CD4-positive, alpha-beta memory T cell (primary cell): ENCODE measurements at regions of chr15 and their contacts with region 1.

Region 1: GRCh38 chr15:75684642-75685041 is 28.0 kb downstream of the CSPG4 start:
- DNase-seq: no peak
- H3K4me3 ChIP-seq: no peak overlapping the region
- H3K4me3 Mint-ChIP-seq: no peak overlapping the region
- H3K27ac ChIP-seq: no peak overlapping the region
- H3K27ac Mint-ChIP-seq: no peak overlapping the region
- H3K4me1 ChIP-seq: no peaks in the 10 kb centered on the region
- H3K4me1 Mint-ChIP-seq: no peaks in the 10 kb centered on the region
- H3K27me3 ChIP-seq: no peaks in the 10 kb centered on the region
- H3K27me3 Mint-ChIP-seq: peaks cover 0 to 3% of the 10 kb centered on the region in 2 donors

Region 2: DNA sequence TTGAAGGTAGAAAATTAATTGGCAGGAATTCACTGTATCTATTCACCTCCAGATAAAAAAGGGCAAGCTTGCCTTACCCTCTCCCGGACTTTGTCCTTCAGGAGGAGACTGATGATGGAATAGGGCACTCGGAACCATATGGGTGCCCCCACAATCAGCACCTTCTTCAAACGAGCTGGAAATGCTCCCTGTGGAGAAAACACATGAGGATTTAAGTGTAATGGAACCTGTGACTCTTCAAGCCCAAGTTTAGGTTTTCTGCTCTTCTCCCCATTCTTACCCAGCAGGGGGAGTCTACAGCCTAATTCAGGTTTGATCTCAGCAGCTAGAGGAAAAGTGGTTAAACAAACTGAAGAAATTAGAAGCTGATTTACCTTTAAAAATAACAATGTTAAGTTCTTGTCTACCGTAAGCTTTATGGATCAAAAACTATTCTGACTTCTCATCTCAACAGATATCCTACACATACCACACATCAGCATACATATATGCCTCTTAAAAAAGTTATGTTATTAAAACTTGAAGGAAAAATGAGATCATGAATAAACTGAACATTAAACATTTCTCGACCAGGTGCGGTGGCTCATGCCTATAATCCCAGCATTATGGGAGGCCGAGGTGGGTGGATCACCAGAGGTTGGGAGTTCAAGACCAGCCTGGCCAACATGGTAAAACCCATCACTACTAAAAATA is 175.7 kb before region 1 on chr15:
- CTCF ChIA-PET with region 1: interaction called, 20 read pairs
- POLR2A ChIA-PET with region 1: no interaction called
- intact Hi-C with region 1: no loop called
- DNase-seq: peak in 4 of 5 donors; percentile 40 to 49 (median 44)
- H3K4me3 ChIP-seq: no peak overlapping the region
- H3K4me3 Mint-ChIP-seq: no peak overlapping the region
- H3K27ac ChIP-seq: no peak overlapping the region
- H3K27ac Mint-ChIP-seq: peak overlapping the region in 2 of 7 donors; percentile 50 to 78
- H3K4me1 ChIP-seq: no peaks in the 10 kb centered on the region
- H3K4me1 Mint-ChIP-seq: peaks cover 0 to 3% (median 0%) of the 10 kb centered on the region in 4 donors
- H3K27me3 ChIP-seq: no peaks in the 10 kb centered on the region
- H3K27me3 Mint-ChIP-seq: no peaks in the 10 kb centered on the region

Region 3: GRCh38 chr15:75597667-75598341 is 86.8 kb before region 1 on chr15:
- CTCF ChIA-PET with region 1: interaction called, 3 read pairs
- POLR2A ChIA-PET with region 1: no interaction called
- intact Hi-C with region 1: loop called (anchors 5 kb)
- DNase-seq: peak; percentile 19 to 50 (median 33)
- H3K4me3 ChIP-seq: no peak overlapping the region
- H3K4me3 Mint-ChIP-seq: peak overlapping the region in 6 of 8 donors; percentile 1 to 68 (median 36)
- H3K27ac ChIP-seq: no peak overlapping the region
- H3K27ac Mint-ChIP-seq: peak overlapping the region in 6 of 7 donors; percentile 15 to 93 (median 59)
- H3K4me1 ChIP-seq: peaks cover 25% of the 10 kb centered on the region
- H3K4me1 Mint-ChIP-seq: peaks cover 16 to 26% (median 21%) of the 10 kb centered on the region in 4 donors
- H3K27me3 ChIP-seq: no peaks in the 10 kb centered on the region
- H3K27me3 Mint-ChIP-seq: no peaks in the 10 kb centered on the region